PC-9 (cell line): ENCODE measurements at regions of chr14 and their contacts with region 1.

Region 1: GRCh38 chr14:103104654-103105452 is 10.3 kb downstream of the EXOC3L4 start:
- DNase-seq: peak; percentile 76 to 93
- H3K4me3 ChIP-seq: peak overlapping the region; percentile 54; the same call in 1 of the 2 replicates
- H3K27ac ChIP-seq: no peak overlapping the region
- H3K4me1 ChIP-seq: peaks cover 68% of the 10 kb centered on the region
- H3K27me3 ChIP-seq: no peaks in the 10 kb centered on the region
- CTCF ChIP-seq: peak; percentile 100

Region 2: GRCh38 chr14:103078093-103078749 is 26.6 kb before region 1 on chr14:
- CTCF ChIA-PET with region 1: interaction called, 13 read pairs
- POLR2A ChIA-PET with region 1: no interaction called
- intact Hi-C with region 1: loop called (anchors 1 kb)
- DNase-seq: peak; percentile 88 to 93
- H3K4me3 ChIP-seq: no peak overlapping the region
- H3K27ac ChIP-seq: no peak overlapping the region
- H3K4me1 ChIP-seq: peaks cover 28% of the 10 kb centered on the region
- H3K27me3 ChIP-seq: no peaks in the 10 kb centered on the region
- CTCF ChIP-seq: peak; percentile 96

Region 3: GRCh38 chr14:103130965-103131364 is 26.1 kb after region 1 on chr14:
- CTCF ChIA-PET with region 1: interaction called, 43 read pairs
- POLR2A ChIA-PET with region 1: interaction called, 22 read pairs
- intact Hi-C with region 1: loop called (anchors 1 kb)
- DNase-seq: peak; percentile 89 to 98
- H3K4me3 ChIP-seq: no peak overlapping the region
- H3K27ac ChIP-seq: peak overlapping the region; percentile 86
- H3K4me1 ChIP-seq: peaks cover 89% of the 10 kb centered on the region
- H3K27me3 ChIP-seq: no peaks in the 10 kb centered on the region
- CTCF ChIP-seq: no peak

Region 4: GRCh38 chr14:103185051-103185992 is 80.5 kb after region 1 on chr14:
- CTCF ChIA-PET with region 1: interaction called, 5 read pairs
- POLR2A ChIA-PET with region 1: no interaction called
- intact Hi-C with region 1: loop called (anchors 1 kb)
- DNase-seq: peak; percentile 49 to 96
- H3K4me3 ChIP-seq: peak overlapping the region; percentile 14; the same call in 1 of the 2 replicates
- H3K27ac ChIP-seq: peak overlapping the region; percentile 92
- H3K4me1 ChIP-seq: peaks cover 37% of the 10 kb centered on the region
- H3K27me3 ChIP-seq: no peaks in the 10 kb centered on the region
- CTCF ChIP-seq: peak; percentile 100

Region 5: GRCh38 chr14:103298620-103299019 is 193.8 kb after region 1 on chr14:
- CTCF ChIA-PET with region 1: interaction called, 18 read pairs
- POLR2A ChIA-PET with region 1: no interaction called
- intact Hi-C with region 1: loop called (anchors 1 kb)
- DNase-seq: no peak
- H3K4me3 ChIP-seq: no peak overlapping the region
- H3K27ac ChIP-seq: no peak overlapping the region
- H3K4me1 ChIP-seq: peaks cover 52% of the 10 kb centered on the region
- H3K27me3 ChIP-seq: no peaks in the 10 kb centered on the region
- CTCF ChIP-seq: peak; percentile 51; the same call in 1 of the 2 replicates